Naive thymus-derived CD4-positive, alpha-beta T cell (primary cell): ENCODE measurements at regions of chr3 and their contacts with region 1.

Region 1: DNA sequence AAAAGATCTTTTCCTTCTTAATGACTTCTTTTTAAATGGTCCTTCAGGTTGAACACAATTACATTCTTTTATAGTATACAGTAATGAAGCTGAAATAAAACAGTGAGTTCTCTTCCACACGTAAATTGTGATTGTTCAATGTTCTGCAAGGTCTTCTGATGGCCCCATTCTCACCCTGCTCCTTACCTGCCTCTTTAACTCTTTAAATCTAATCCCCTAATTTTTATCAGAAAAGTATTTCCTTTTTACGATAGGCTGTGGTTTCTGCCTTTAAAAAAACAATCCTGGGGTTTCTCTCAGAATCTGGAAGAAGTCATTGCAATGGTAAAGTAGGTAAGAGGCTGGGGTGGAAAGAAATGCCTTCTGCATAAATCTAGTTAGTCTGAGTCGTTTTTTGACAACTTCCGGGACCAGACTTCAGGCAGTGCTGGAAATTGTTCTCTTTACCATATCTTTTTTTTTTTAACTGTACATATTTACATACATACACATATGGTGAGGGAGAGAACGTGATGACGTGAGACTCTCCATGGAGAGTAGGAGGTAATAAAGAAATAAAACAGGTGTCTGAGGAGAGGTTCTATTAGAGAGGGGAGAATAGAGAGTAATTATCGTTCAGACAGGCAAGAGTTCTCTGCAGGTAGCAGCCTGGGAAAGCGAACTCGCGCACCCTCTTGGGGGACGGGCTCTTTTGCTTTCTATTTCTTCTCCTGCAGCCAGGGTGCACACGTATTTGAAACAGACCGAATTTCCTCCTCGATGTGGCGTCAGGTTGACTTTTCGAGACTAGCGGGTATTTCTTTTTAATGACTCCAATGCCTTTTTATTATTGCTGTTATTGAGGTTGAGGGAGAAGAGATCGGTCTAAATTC is at the start of gene SIDT1:
- DNase-seq: peak; percentile 31 to 87 (median 78)
- ATAC-seq: peak; percentile 87
- H3K4me3 ChIP-seq: peak within 1 kb of the TSS; percentile 96
- H3K4me3 Mint-ChIP-seq: peak within 1 kb of the TSS; percentile 92 to 100 (median 98)
- H3K27ac ChIP-seq: peak within 1 kb of the TSS; percentile 95
- H3K27ac Mint-ChIP-seq: peak within 1 kb of the TSS; percentile 97 to 100 (median 99)
- H3K4me1 ChIP-seq: peaks cover 28 to 40% of the 10 kb centered on the region in 2 donors
- H3K4me1 Mint-ChIP-seq: peaks cover 33 to 69% (median 57%) of the 10 kb centered on the region in 7 donors
- H3K27me3 ChIP-seq: no peaks in the 10 kb centered on the region
- H3K27me3 Mint-ChIP-seq: peaks cover 0 to 16% (median 0%) of the 10 kb centered on the region in 5 donors
- total RNA-seq, gene SIDT1: 32.1 to 65.7 (median 60.7) TPM

Region 2: GRCh38 chr3:112074721-112075497 is 1457.2 kb before region 1 on chr3:
- CTCF ChIA-PET with region 1: no interaction called
- POLR2A ChIA-PET with region 1: no interaction called
- intact Hi-C with region 1: loop called in 1 of 2 experiments (anchors 10 kb)
- DNase-seq: peak in 8 of 9 donors; percentile 29 to 60 (median 52)
- ATAC-seq: peak; percentile 88
- H3K4me3 ChIP-seq: no peak overlapping the region
- H3K4me3 Mint-ChIP-seq: peak overlapping the region; percentile 32 to 76 (median 56)
- H3K27ac ChIP-seq: peak overlapping the region; percentile 32
- H3K27ac Mint-ChIP-seq: peak overlapping the region; percentile 72 to 95 (median 85)
- H3K4me1 ChIP-seq: peaks cover 4 to 17% of the 10 kb centered on the region in 2 donors
- H3K4me1 Mint-ChIP-seq: peaks cover 17 to 57% (median 51%) of the 10 kb centered on the region in 7 donors
- H3K27me3 ChIP-seq: no peaks in the 10 kb centered on the region
- H3K27me3 Mint-ChIP-seq: peaks cover 0 to 3% (median 0%) of the 10 kb centered on the region in 5 donors

Region 3: DNA sequence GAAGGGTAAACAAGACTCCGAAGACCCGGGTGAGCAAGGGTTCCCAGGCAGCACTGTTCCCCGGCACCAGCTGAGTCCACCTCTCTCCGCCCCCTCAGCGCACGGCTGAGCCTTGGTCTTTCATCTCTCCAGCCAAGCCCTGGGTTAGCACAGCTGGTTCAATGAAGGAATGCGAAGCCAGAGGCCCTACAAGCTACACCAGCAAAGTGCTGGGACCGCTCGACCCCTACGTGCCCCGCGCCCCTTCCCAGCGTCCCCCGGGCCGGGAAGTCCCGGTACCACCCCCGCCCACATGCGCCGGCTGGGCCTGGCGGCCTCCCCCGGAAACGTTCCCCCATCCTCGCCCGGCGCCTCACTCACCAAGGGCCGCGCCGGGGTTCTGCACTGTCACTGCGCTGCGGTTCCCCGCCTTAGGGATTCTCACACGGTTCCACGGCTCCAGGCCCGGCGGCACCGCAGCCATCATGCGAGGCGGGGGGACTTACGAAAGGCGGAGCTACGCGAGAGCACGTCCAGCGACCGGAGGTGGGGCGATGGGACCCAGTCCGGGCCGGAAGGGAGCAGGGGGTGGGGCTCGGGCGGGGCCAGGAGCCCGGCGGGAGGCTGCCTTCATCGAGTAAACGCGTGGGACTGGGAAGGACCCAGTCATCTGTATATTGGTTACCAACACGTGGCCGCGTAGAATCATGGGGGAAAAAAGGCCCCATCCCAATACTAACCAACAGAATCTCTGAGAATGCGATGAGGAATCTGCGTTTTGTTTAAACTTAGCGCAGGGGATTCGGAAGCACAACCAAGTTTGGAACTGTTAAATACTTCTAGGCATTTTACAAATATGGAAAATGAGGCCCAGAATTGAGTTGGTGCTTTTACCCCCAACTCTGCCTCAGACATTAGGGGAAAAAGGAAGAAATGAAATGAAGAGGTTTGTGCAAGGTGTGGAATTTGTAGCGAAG is 512.6 kb before region 1 on chr3:
- CTCF ChIA-PET with region 1: no interaction called
- POLR2A ChIA-PET with region 1: no interaction called
- intact Hi-C with region 1: loop called in 1 of 2 experiments (anchors 2 kb)
- DNase-seq: peak; percentile 69 to 89 (median 74)
- ATAC-seq: peak; percentile 92
- H3K4me3 ChIP-seq: peak overlapping the region; percentile 81
- H3K4me3 Mint-ChIP-seq: peak overlapping the region; percentile 87 to 97 (median 92)
- H3K27ac ChIP-seq: peak overlapping the region; percentile 96
- H3K27ac Mint-ChIP-seq: peak overlapping the region; percentile 87 to 96 (median 91)
- H3K4me1 ChIP-seq: peaks cover 19 to 21% of the 10 kb centered on the region in 2 donors
- H3K4me1 Mint-ChIP-seq: peaks cover 44 to 87% (median 71%) of the 10 kb centered on the region in 7 donors
- H3K27me3 ChIP-seq: no peaks in the 10 kb centered on the region
- H3K27me3 Mint-ChIP-seq: no peaks in the 10 kb centered on the region

Region 4: DNA sequence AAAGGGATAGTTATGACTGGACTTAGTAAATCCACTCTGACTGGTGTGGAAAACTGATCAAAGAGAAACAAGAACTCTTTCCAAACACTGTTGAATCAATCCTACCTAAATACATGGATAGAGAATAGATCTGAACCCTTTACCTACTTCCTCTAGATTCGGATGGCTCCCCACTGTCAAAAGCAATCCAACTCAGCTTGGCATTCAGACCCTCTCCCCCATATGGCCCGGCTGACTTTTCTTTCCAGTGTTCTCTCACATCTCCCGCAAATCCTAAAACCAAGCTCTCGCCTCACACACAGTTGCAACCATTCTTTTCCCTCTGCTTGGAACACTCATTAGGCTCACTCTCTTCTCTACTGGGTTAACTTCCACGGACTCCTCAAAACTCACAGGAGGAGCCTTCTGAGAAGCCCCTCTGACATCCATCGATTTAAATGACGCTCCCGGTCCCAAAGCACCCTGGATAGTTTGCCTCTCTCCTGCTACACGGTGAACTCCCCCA is 17.7 kb before region 1 on chr3:
- CTCF ChIA-PET with region 1: interaction called, 14 read pairs
- POLR2A ChIA-PET with region 1: interaction called, 71 read pairs
- intact Hi-C with region 1: loop called (anchors 1 kb)
- DNase-seq: no peak
- ATAC-seq: no peak
- H3K4me3 ChIP-seq: peak overlapping the region; percentile 99
- H3K4me3 Mint-ChIP-seq: no peak overlapping the region
- H3K27ac ChIP-seq: peak overlapping the region; percentile 87
- H3K27ac Mint-ChIP-seq: no peak overlapping the region
- H3K4me1 ChIP-seq: peaks cover 7 to 8% of the 10 kb centered on the region in 2 donors
- H3K4me1 Mint-ChIP-seq: peaks cover 6 to 30% (median 27%) of the 10 kb centered on the region in 7 donors
- H3K27me3 ChIP-seq: no peaks in the 10 kb centered on the region
- H3K27me3 Mint-ChIP-seq: peaks cover 10 to 29% (median 15%) of the 10 kb centered on the region in 5 donors

Region 5: GRCh38 chr3:113552851-113553250 is 20.8 kb after region 1 on chr3:
- CTCF ChIA-PET with region 1: interaction called, 6 read pairs
- POLR2A ChIA-PET with region 1: interaction called, 6 read pairs
- intact Hi-C with region 1: loop called in 1 of 2 experiments (anchors 1 kb)
- DNase-seq: peak in 7 of 9 donors; percentile 31 to 58 (median 47)
- ATAC-seq: peak; percentile 81
- H3K4me3 ChIP-seq: no peak overlapping the region
- H3K4me3 Mint-ChIP-seq: no peak overlapping the region
- H3K27ac ChIP-seq: no peak overlapping the region
- H3K27ac Mint-ChIP-seq: peak overlapping the region in 6 of 9 donors; percentile 0 to 79 (median 28)
- H3K4me1 ChIP-seq: no peaks in the 10 kb centered on the region
- H3K4me1 Mint-ChIP-seq: peaks cover 9 to 80% (median 62%) of the 10 kb centered on the region in 7 donors
- H3K27me3 ChIP-seq: no peaks in the 10 kb centered on the region
- H3K27me3 Mint-ChIP-seq: no peaks in the 10 kb centered on the region

Region 6: DNA sequence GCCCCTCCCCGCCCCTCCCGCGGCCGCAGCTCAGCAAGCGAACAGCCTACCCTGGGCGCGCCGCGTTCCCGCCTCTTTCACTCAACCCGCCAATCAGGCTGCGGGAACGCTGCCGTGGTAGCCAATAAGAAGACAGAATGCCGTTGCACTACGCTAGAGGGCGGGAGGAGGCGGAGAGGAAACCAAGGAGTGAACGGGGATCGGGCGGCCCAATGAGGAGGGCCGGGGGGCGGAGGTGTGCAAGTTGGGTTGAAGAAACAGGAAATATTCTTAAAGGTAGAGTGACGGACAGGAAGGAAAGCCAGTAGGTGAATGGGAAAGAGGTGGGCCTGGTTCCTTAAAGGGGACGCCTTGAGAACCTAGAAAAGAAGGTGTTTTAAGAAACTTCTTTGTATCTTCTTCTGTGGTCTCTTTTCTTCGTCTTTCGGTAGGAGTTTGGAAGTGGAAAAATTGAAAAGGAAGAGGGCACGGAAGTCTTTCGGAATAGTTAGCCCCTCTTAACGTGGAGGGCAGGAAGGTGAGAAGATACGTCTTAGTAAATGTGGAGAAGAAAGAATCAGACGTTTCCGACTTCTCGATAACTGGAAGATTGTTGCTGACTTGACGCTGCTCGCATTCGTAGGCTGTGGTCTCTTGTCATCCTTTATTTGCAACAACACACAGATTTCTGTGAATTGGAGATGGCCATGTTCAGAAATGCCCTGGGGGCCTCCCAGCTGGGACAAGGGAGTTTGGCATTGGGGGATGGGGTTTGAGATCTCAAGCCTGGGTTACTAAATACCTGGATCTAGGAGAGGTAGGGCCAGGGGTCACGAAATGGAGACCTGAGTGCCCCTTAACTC is 164.8 kb after region 1 on chr3:
- CTCF ChIA-PET with region 1: no interaction called
- POLR2A ChIA-PET with region 1: interaction called, 5 read pairs
- intact Hi-C with region 1: loop called (anchors 1 kb)
- DNase-seq: peak; percentile 96 to 100 (median 99)
- ATAC-seq: peak; percentile 93
- H3K4me3 ChIP-seq: peak overlapping the region; percentile 82
- H3K4me3 Mint-ChIP-seq: no peak overlapping the region
- H3K27ac ChIP-seq: peak overlapping the region; percentile 99
- H3K27ac Mint-ChIP-seq: no peak overlapping the region
- H3K4me1 ChIP-seq: peaks cover 11 to 27% of the 10 kb centered on the region in 2 donors
- H3K4me1 Mint-ChIP-seq: peaks cover 23 to 36% (median 29%) of the 10 kb centered on the region in 7 donors
- H3K27me3 ChIP-seq: no peaks in the 10 kb centered on the region
- H3K27me3 Mint-ChIP-seq: no peaks in the 10 kb centered on the region